SK-N-SH (cell line): ENCODE measurements at regions of chr1 and their contacts with region 1.

Region 1: DNA sequence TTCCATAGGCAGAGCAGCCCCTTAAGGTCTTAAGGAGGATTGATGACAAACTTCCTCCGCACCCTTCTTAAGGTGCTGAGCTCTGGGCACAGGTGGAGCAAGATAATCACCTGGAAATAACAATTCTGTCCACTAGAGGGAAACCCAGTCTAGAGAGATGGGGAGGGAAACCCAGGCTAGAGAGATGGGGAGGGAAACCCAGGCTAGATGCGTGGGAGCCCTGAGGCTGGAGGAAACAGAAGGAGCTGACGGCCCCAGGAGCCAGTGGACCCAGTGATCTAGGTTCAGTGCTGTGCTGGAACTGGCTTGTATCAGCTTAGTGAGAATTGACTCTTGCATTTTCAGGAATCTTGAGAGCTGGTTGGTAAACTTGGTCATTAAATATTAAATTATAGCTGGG is 17.8 kb upstream of the MYCL start:
- DNase-seq: peak; percentile 88
- H3K4me3 ChIP-seq: no peak overlapping the region
- H3K27ac ChIP-seq: no peak overlapping the region
- H3K4me1 ChIP-seq: no peaks in the 10 kb centered on the region
- H3K27me3 ChIP-seq: no peaks in the 10 kb centered on the region; the same call in none of the 2 replicates
- CTCF ChIP-seq: peak; percentile 67
- EP300 ChIP-seq: no peak
- RAD21 ChIP-seq: peak; percentile 85

Region 2: DNA sequence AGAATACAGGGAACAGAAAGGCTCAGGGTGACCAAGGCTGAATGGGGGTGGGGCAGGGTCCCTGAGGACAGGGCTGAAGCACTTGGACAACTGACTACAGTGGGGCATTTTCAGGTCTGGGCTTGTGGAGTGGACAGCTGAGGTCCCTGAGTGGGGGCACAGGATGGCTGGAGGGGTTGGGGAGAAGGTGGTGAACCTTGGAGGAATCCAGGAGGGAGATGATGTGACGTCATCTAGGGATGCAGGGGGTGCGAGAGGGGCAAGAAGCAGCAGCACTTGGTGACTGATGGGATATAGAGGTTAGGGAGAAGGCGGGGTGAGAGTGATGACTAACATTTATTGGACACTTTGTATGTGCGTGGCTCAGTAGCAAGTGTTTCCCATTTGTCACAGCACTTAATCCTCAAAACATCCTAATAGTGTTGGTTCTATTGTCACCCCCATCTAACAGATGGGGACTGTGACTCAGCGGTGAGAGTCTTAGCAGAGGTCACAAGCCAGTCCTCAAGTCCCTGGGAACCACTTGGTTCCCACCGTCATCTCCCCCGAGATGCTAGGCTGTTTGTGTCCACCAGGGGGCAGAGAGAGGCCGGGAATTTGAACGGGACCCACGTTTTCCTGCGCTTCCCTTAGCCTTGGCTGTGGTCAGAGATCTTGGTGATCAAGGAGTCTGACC is 103.0 kb before region 1 on chr1:
- CTCF ChIA-PET with region 1: interaction called, 45 read pairs
- POLR2A ChIA-PET with region 1: no interaction called
- DNase-seq: peak; percentile 86
- H3K4me3 ChIP-seq: no peak overlapping the region
- H3K27ac ChIP-seq: no peak overlapping the region
- H3K4me1 ChIP-seq: no peaks in the 10 kb centered on the region
- H3K27me3 ChIP-seq: peaks cover 5% of the 10 kb centered on the region; the same call in 1 of the 2 replicates
- CTCF ChIP-seq: peak; percentile 94
- EP300 ChIP-seq: no peak
- RAD21 ChIP-seq: peak; percentile 83

Region 3: DNA sequence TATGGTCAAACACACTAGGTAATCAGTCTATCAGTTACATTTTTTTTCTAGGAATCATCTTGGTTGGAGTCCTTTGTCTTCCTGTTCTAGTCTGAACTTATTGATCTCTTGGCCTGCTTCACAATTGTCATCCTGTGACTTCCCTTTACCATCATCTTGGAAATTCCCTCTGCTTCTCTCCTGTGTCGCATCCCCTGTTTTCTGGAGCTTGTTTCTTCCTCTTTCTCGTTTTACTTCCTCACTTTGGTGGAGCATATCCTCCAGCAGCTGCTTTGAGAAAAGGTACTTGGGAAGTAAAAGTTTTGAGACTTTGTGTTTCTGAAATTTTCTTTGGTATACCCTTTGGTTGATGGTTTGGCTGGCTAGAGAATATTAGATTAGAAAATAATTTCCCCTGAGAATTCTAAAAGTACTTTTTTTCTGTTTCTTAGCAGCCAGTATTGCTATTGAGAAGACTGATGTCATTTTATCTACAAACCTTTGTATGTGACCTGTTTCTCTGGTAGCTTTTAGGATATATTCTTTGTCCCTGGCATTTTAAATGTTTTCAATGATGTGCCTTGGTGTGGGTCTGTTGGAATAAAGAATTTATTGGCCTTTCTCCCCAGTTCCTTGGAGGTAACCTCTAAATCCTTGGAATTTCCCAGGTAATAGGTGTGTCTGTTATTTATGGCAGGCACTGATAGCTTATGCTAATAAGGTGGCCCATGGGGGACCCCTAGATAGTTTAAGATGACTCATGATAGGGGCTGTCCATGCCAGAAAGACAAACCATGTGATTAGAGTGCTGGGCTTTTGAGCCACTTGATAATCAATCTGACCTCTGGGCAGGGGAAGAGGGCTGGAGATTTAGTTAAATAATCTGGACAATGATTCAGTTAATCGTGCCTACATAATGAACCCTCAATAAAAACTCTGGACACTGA is 11.8 kb before region 1 on chr1:
- CTCF ChIA-PET with region 1: interaction called, 21 read pairs
- POLR2A ChIA-PET with region 1: no interaction called
- DNase-seq: no peak
- H3K4me3 ChIP-seq: no peak overlapping the region
- H3K27ac ChIP-seq: no peak overlapping the region
- H3K4me1 ChIP-seq: no peaks in the 10 kb centered on the region; a peak in 1 of 4 replicates
- H3K27me3 ChIP-seq: peaks cover 12% of the 10 kb centered on the region; the same call in 1 of the 2 replicates
- CTCF ChIP-seq: no peak
- EP300 ChIP-seq: no peak
- RAD21 ChIP-seq: no peak

Region 4: DNA sequence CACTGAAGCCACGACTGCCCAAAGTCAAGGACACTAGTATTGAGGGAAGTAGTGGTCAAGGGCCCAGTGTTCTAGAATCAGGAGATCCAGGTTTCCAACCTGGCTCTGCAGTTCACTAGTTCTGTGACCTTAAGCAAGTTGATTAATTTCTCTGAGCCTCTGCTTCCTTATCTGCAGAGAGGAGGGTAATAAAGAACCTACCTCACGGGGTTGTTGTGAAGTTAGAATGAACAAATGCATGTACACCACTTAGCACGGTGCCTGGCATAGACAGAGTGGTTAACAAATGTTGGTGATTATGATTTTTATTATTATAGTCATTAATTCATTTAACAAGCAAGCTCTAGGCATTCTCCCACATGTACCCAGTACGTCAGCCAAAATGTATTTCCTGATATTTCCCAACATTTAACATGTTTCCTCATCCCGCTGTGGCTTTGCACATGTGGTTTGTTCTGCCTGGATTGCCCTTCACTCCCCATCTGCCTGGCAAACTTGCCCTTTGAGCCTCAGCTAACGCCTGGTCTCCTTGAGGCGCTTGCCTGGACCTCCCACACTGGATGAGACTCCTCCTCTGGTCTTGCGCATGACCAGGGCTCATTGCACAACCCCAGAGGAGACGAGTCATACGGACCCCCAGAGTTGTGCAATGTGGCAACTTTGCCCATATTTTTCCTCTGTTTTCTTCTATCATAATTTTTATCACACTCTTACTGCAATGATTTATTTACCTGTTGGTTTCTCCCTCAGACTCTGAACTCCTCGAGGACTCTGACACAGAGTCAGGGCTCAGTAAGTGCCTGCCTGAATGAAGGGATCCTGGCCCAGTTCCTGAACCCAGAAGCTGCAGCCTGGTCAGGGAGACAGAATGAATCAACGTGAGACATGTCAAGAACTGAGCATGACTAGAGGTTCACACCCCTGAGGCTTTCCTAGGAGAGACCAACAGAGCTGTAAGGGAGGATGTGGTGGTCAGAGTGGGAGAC is 14.7 kb after region 1 on chr1:
- CTCF ChIA-PET with region 1: interaction called, 15 read pairs
- POLR2A ChIA-PET with region 1: no interaction called
- DNase-seq: no peak
- H3K4me3 ChIP-seq: no peak overlapping the region
- H3K27ac ChIP-seq: no peak overlapping the region
- H3K4me1 ChIP-seq: no peaks in the 10 kb centered on the region; a peak in 1 of 4 replicates
- H3K27me3 ChIP-seq: no peaks in the 10 kb centered on the region; the same call in 1 of the 2 replicates
- CTCF ChIP-seq: no peak
- EP300 ChIP-seq: no peak
- RAD21 ChIP-seq: no peak

Region 5: GRCh38 chr1:39954816-39955546 is 35.4 kb after region 1 on chr1 and contains the start of gene MFSD2A:
- CTCF ChIA-PET with region 1: interaction called, 10 read pairs
- POLR2A ChIA-PET with region 1: no interaction called
- DNase-seq: peak; percentile 98
- H3K4me3 ChIP-seq: peak within 1 kb of the TSS; percentile 66 to 71
- H3K27ac ChIP-seq: peak within 1 kb of the TSS in 1 of 2 experiments; percentile 40; a peak in 1 of 4 replicates
- H3K4me1 ChIP-seq: peaks cover 0 to 23% of the 10 kb centered on the region in 2 experiments; a peak in 1 of 4 replicates
- H3K27me3 ChIP-seq: no peaks in the 10 kb centered on the region
- CTCF ChIP-seq: no peak
- EP300 ChIP-seq: no peak
- RAD21 ChIP-seq: no peak
- polyA plus RNA-seq, gene MFSD2A: 4.1 and 6.3 TPM in 2 replicates

Region 6: GRCh38 chr1:40081871-40082270 is 162.3 kb after region 1 on chr1:
- CTCF ChIA-PET with region 1: no interaction called
- POLR2A ChIA-PET with region 1: no interaction called
- DNase-seq: no peak
- H3K4me3 ChIP-seq: no peak overlapping the region
- H3K27ac ChIP-seq: no peak overlapping the region
- H3K4me1 ChIP-seq: peaks cover 0 to 3% of the 10 kb centered on the region in 2 experiments; a peak in 1 of 4 replicates
- H3K27me3 ChIP-seq: no peaks in the 10 kb centered on the region
- CTCF ChIP-seq: no peak
- EP300 ChIP-seq: no peak
- RAD21 ChIP-seq: no peak